Panc1 (cell line): ENCODE measurements at regions of chr12 and their contacts with region 1.

Region 1: GRCh38 chr12:109432841-109433304 is 44.2 kb downstream of the KCTD10 start:
- DNase-seq: peak; percentile 61
- ATAC-seq: peak; percentile 89
- H3K4me3 ChIP-seq: no peak overlapping the region
- H3K27ac ChIP-seq: no peak overlapping the region
- H3K4me1 ChIP-seq: no peaks in the 10 kb centered on the region
- H3K27me3 ChIP-seq: no peaks in the 10 kb centered on the region
- CTCF ChIP-seq: peak; percentile 96

Region 2: GRCh38 chr12:109775172-109775881 is 342.5 kb after region 1 on chr12:
- CTCF ChIA-PET with region 1: no interaction called
- POLR2A ChIA-PET with region 1: no interaction called
- in situ Hi-C with region 1: no loop called
- intact Hi-C with region 1: loop called (anchors 10 kb)
- DNase-seq: peak; percentile 30
- ATAC-seq: peak; percentile 88
- H3K4me3 ChIP-seq: no peak overlapping the region
- H3K27ac ChIP-seq: no peak overlapping the region
- H3K4me1 ChIP-seq: peaks cover 8% of the 10 kb centered on the region
- H3K27me3 ChIP-seq: no peaks in the 10 kb centered on the region
- CTCF ChIP-seq: peak; percentile 97

Region 3: GRCh38 chr12:110619534-110619953 is 1186.7 kb after region 1 on chr12:
- CTCF ChIA-PET with region 1: no interaction called
- POLR2A ChIA-PET with region 1: no interaction called
- in situ Hi-C with region 1: no loop called
- intact Hi-C with region 1: no loop called
- DNase-seq: no peak
- ATAC-seq: no peak
- H3K4me3 ChIP-seq: no peak overlapping the region
- H3K27ac ChIP-seq: no peak overlapping the region
- H3K4me1 ChIP-seq: 0 out of 2 replicates have a peak, but pooled peaks cover 1% of the 10 kb centered on the region
- H3K27me3 ChIP-seq: no peaks in the 10 kb centered on the region
- CTCF ChIP-seq: no peak